Heart left ventricle (tissue), 16 donors: ENCODE measurements at regions of chr5 and their contacts with region 1.

Region 1: DNA sequence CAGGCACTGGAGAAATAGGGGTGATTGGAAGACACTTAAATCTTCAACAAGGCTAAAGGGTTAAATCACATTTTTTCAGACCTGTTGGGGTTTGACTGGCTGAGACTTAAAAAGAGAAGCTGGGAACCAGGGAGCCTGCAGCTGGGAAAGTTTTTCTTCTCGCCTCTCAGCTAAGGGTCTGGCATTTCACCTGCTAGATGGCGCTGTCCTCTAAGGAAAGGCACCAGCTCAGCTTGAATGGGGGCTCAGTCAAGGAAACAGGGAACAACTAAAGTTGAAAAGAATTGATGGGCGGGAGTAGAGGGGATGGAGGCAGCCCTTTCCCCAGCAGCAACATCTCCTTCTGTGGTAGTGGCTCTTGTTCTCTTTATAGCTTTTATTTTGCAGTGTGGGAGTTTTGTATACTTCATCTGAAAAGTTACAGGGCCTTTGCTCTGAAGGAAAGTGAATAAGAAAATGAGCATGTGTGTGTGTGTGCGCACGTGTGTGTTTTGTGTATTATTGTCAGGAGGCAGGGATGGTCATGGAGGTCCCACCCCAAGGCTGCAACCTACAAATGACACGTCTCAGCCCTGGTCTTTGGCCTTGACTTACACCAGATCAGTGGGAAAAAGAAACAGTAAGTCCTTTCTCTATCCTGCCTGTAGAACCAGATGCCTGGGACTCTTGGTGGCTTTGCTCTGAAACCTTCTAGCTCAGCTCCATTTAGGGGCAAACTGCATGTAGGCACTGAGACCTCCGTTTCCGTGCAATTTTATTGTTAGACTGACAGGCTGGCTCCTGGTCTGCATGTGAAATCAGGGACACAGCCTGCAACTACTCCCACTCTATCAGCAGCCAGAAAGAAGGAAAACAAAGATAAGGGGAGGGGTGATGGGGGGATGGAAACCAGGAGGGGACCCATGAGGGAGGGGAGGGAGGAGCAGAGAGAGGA is 316.2 kb upstream of the CLINT1 start:
- DNase-seq: peak in 4 of 5 donors; percentile 74 to 83 (median 80)
- ATAC-seq: peak; percentile 79 to 94 (median 91)
- H3K4me3 ChIP-seq: no peak overlapping the region
- H3K27ac ChIP-seq: peak overlapping the region in 11 of 12 donors; percentile 10 to 72 (median 37)
- H3K4me1 ChIP-seq: peaks cover 0 to 22% (median 15%) of the 10 kb centered on the region in 12 donors
- H3K27me3 ChIP-seq: peaks cover 0 to 7% (median 0%) of the 10 kb centered on the region in 9 donors
- CTCF ChIP-seq: peak; percentile 70 to 91 (median 77)
- POLR2A ChIP-seq: no peak

Region 2: DNA sequence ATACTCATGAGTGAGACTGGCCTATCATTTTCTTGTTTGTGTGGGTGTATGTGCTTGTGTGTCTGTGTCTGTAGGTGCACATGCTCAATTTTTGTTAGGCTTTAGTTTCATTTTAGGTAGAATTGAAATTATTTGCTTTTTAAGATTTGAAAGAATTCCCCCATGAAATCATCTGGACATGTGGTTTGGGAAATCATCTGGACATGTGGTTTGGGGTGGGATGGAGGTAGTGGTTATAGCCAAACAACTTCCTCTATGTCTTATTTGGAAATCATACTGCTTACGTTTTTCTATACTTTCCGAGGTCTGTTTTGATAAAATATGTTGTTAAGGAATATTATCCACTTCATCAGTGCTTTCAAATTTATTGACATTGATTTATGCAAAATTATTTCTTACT is 169.2 kb after region 1 on chr5:
- intact Hi-C with region 1: no loop called
- DNase-seq: no peak
- ATAC-seq: no peak
- H3K4me3 ChIP-seq: no peak overlapping the region
- H3K27ac ChIP-seq: no peak overlapping the region
- H3K4me1 ChIP-seq: no peaks in the 10 kb centered on the region
- H3K27me3 ChIP-seq: no peaks in the 10 kb centered on the region
- CTCF ChIP-seq: no peak
- POLR2A ChIP-seq: no peak

Region 3: GRCh38 chr5:158423623-158424200 is 248.5 kb after region 1 on chr5:
- intact Hi-C with region 1: loop called in 2 of 10 experiments (anchors 5 kb)
- DNase-seq: no peak
- ATAC-seq: peak in 2 of 4 donors; percentile 47 to 68
- H3K4me3 ChIP-seq: no peak overlapping the region
- H3K27ac ChIP-seq: peak overlapping the region; percentile 18 to 91 (median 78)
- H3K4me1 ChIP-seq: peaks cover 0 to 37% (median 13%) of the 10 kb centered on the region in 12 donors
- H3K27me3 ChIP-seq: no peaks in the 10 kb centered on the region
- CTCF ChIP-seq: no peak
- POLR2A ChIP-seq: no peak

Region 4: GRCh38 chr5:158511454-158511853 is 336.3 kb after region 1 on chr5:
- intact Hi-C with region 1: loop called in 1 of 10 experiments (anchors 10 kb)
- DNase-seq: no peak
- ATAC-seq: no peak
- H3K4me3 ChIP-seq: no peak overlapping the region
- H3K27ac ChIP-seq: no peak overlapping the region
- H3K4me1 ChIP-seq: peaks cover 0 to 22% (median 6%) of the 10 kb centered on the region in 12 donors
- H3K27me3 ChIP-seq: no peaks in the 10 kb centered on the region
- CTCF ChIP-seq: no peak
- POLR2A ChIP-seq: no peak

Region 5: DNA sequence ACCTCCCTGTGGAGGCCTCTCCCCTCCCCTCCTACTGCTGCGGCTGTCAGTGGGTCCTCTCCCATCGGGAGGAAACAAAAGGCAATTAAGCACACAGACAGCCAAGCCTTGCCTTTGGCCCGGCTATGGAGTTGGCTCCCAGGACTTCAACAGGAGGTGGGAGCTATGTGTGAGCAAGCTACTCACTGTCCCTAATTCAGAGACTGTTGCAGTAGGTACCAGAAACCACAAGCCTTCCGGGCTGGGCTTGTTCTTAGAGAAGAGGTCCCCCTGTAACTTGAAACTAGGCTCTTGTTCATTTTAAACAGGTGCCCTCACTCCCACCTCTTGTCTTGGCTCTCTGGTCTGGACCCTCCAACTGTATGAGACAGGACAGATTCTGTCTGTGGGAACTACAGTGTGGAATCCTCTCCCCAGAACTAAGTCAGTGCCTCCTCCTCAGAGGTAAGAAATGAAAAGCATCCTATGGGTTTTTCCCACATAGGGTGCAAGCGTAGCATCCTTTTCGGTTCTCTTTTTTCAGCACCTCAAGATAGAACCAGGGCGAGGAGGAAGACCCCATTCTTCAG is 363.4 kb after region 1 on chr5:
- intact Hi-C with region 1: no loop called
- DNase-seq: peak in 2 of 5 donors; percentile 34 to 37
- ATAC-seq: peak; percentile 17 to 74 (median 61)
- H3K4me3 ChIP-seq: no peak overlapping the region
- H3K27ac ChIP-seq: peak overlapping the region in 5 of 12 donors; percentile 3 to 43 (median 22)
- H3K4me1 ChIP-seq: peaks cover 0 to 10% (median 3%) of the 10 kb centered on the region in 12 donors
- H3K27me3 ChIP-seq: no peaks in the 10 kb centered on the region
- CTCF ChIP-seq: no peak
- POLR2A ChIP-seq: no peak

Region 6: DNA sequence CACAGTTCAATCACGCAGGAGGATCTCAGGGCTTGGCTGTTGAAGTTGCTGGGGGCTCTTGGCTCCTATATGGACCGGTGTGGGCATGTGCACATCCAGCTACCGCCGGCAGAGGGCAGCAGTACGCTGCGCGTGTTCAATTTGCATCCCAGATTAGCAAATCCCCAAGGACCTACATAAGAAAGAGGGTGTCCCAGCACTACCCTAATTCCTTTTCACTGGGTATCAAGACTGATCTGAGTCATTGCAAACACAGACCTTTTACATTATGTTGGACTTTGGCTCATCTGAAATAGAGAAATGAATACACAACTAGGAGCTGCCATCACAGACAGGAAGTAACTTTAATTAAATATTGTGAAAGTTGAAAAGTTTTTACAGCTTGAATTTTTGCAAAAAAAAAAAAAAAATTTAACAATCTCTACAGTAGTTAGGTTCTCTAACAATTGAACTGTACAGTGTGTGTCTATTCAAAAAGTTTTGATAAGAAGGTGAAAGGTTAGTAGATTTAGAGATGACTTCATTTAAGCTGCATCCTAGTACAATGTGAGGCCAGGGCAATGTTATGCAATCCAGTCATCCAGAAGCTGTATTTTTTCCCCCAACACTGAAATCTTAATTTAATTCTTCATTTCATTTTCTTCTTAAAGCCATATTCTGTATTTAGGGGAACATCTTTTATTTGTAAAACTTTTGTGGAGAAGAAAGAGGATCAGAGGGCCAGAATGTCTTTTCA is 520.6 kb after region 1 on chr5:
- intact Hi-C with region 1: loop called in 8 of 10 experiments (anchors 1 to 10 kb)
- DNase-seq: peak; percentile 67 to 83 (median 72)
- ATAC-seq: peak; percentile 57 to 91 (median 82)
- H3K4me3 ChIP-seq: no peak overlapping the region
- H3K27ac ChIP-seq: peak overlapping the region in 8 of 12 donors; percentile 14 to 58 (median 40)
- H3K4me1 ChIP-seq: peaks cover 0 to 66% (median 6%) of the 10 kb centered on the region in 12 donors
- H3K27me3 ChIP-seq: peaks cover 0 to 9% (median 0%) of the 10 kb centered on the region in 9 donors
- CTCF ChIP-seq: peak; percentile 89 to 99 (median 97)
- POLR2A ChIP-seq: no peak

Region 7: DNA sequence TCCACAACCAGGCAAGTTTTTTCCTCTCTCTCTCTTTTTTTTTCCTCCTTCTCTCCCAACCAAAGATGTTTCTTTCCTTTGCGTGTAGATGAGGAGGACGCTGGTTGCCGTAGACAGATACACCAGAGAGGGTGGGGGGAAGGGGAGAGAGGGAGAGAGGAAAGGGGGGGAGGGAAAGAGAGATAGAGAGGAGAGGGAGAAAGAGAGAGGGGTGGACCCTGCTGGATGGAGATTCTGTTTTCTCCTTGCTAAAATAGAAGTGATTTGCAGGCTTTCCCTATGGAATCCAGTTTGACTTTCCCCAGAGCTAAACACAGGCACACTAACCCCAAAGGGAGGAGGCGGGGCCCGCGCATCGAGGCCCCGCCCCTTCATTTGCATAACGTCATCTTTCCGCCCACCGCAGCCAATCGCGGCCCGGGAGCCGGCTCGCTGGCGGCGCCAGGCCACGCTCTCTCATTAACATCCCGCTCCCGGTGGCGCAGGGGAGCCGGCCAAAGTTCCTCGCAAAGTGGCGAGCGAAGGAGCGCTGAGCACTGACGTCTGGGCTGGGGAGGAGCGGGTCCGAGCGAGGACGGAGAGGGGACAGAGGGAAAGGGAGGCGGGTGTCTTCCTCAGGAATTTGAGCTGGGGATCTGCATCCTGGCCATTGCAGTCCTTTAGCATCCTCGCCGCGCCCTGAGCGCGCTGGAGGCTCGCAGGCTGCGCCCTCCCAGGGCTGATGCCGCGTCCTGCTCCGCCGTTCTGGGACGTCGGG is 925.0 kb after region 1 on chr5:
- intact Hi-C with region 1: loop called in 3 of 10 experiments (anchors 2 to 5 kb)
- DNase-seq: peak; percentile 92 to 95 (median 93)
- ATAC-seq: peak; percentile 86 to 93 (median 90)
- H3K4me3 ChIP-seq: peak overlapping the region; percentile 50 to 87 (median 72)
- H3K27ac ChIP-seq: peak overlapping the region; percentile 81 to 95 (median 92)
- H3K4me1 ChIP-seq: peaks cover 0 to 56% (median 23%) of the 10 kb centered on the region in 12 donors
- H3K27me3 ChIP-seq: peaks cover 0 to 74% (median 15%) of the 10 kb centered on the region in 9 donors
- CTCF ChIP-seq: peak in 2 of 12 donors; percentile 14 to 19
- POLR2A ChIP-seq: peak; percentile 76 to 99

Region 8: GRCh38 chr5:159133041-159133741 is 958.0 kb after region 1 on chr5:
- intact Hi-C with region 1: loop called in 3 of 10 experiments (anchors 2 to 10 kb)
- DNase-seq: no peak
- ATAC-seq: peak in 3 of 4 donors; percentile 44 to 78 (median 58)
- H3K4me3 ChIP-seq: peak overlapping the region in 8 of 12 donors; percentile 6 to 41 (median 28)
- H3K27ac ChIP-seq: peak overlapping the region in 1 of 12 donors; percentile 25
- H3K4me1 ChIP-seq: peaks cover 0 to 8% (median 0%) of the 10 kb centered on the region in 12 donors
- H3K27me3 ChIP-seq: peaks cover 0 to 7% (median 0%) of the 10 kb centered on the region in 9 donors
- CTCF ChIP-seq: peak; percentile 74 to 88 (median 82)
- POLR2A ChIP-seq: no peak